Endothelial cell of umbilical vein (primary cell): ENCODE measurements at regions of chr16 and their contacts with region 1.

Region 1: DNA sequence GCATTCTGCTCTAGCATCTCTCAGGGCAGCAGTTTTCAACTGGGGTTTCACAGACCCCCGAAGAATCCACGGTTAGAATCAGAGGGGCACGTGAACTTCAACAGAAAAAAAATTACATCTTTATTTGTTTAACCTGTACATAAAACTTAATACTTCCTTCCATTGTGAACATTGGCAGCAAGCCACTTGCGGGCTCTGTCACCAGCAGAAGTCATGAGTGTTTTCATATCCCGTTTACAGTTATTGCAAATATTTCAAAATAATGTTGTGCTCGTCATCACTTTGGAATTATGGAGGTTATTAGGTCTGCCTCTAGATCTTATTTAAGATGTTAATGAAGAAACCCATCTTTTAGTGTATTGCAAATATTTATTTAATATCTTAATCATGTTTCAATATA is 109.8 kb downstream of the SDR42E1 start:
- DNase-seq: peak; percentile 97
- H3K4me3 ChIP-seq: peak overlapping the region in 1 of 3 experiments; percentile 4
- H3K27ac ChIP-seq: peak overlapping the region; percentile 88
- H3K4me1 ChIP-seq: peaks cover 31% of the 10 kb centered on the region
- H3K27me3 ChIP-seq: no peaks in the 10 kb centered on the region
- CTCF ChIP-seq: no peak
- POLR2A ChIP-seq: peak; percentile 57

Region 2: DNA sequence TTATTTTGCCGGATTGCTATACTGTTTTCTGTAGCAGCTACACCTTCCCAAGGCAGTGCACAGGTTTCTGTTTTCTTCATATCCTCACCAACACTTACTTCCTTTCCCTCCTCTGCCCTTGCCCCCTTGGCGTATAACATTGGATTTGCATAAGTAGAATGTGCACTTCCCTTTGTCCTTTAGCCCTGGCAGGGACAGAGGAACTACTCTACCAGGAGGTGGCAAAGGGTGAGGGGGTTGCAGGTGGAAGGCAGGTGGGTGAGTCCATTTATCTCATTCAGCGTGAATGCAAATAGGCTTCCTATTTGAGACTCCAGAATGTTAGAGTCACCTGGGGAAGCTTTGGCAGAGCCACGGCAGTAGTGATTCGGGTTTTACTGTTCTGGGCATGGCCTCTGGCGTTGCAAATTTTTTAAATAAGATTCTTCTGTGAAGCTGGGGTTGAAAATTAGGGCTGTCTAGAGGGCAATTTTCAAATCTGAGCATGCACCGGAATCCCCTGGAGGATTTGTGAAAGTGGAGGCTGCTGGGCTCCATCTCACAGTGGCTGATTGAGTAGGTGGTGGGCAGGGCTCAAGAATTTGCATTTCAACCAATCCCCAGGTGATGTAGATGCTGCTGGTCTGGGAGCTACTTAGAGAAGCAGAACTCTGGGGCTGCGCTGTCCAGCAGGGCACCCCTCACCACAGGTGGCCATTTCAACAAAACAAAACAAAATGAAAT is 37.7 kb before region 1 on chr16:
- CTCF ChIA-PET with region 1: no interaction called
- POLR2A ChIA-PET with region 1: no interaction called
- dilution Hi-C with region 1: no loop called
- intact Hi-C with region 1: loop called (anchors 2 kb)
- DNase-seq: no peak
- H3K4me3 ChIP-seq: no peak overlapping the region
- H3K27ac ChIP-seq: no peak overlapping the region
- H3K4me1 ChIP-seq: peaks cover 25% of the 10 kb centered on the region
- H3K27me3 ChIP-seq: no peaks in the 10 kb centered on the region
- CTCF ChIP-seq: no peak
- POLR2A ChIP-seq: no peak

Region 3: DNA sequence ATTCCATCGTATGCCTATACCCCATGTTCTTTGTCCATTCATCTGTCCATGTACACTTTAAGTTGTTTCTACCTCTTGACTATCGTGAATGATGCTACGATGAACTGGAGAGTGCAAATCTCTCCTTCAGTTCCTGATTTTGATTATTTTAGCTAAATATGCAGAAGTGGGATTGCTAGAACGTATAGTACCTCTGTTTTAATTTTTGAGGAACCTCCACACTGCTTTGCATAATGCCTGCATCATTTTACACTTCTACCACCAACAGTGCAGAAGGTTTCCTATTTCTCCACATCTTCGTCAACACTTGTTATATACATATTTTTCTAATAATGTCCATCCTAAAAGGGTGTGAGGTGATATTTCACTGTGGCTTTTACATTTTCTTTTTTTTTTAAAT is 65.9 kb after region 1 on chr16:
- CTCF ChIA-PET with region 1: no interaction called
- POLR2A ChIA-PET with region 1: no interaction called
- dilution Hi-C with region 1: no loop called
- intact Hi-C with region 1: no loop called
- DNase-seq: no peak
- H3K4me3 ChIP-seq: no peak overlapping the region
- H3K27ac ChIP-seq: no peak overlapping the region
- H3K4me1 ChIP-seq: no peaks in the 10 kb centered on the region
- H3K27me3 ChIP-seq: peaks cover 0 to 4% of the 10 kb centered on the region in 2 experiments
- CTCF ChIP-seq: no peak
- POLR2A ChIP-seq: no peak

Region 4: GRCh38 chr16:81996664-81997622 is 95.5 kb after region 1 on chr16:
- CTCF ChIA-PET with region 1: interaction called, 16 read pairs
- POLR2A ChIA-PET with region 1: interaction called, 13 read pairs
- dilution Hi-C with region 1: no loop called
- intact Hi-C with region 1: loop called (anchors 1 kb)
- DNase-seq: peak; percentile 90
- H3K4me3 ChIP-seq: peak overlapping the region in 1 of 3 experiments; percentile 33
- H3K27ac ChIP-seq: peak overlapping the region; percentile 96
- H3K4me1 ChIP-seq: peaks cover 41% of the 10 kb centered on the region
- H3K27me3 ChIP-seq: no peaks in the 10 kb centered on the region
- CTCF ChIP-seq: peak; percentile 34 to 39
- POLR2A ChIP-seq: no peak

Region 5: DNA sequence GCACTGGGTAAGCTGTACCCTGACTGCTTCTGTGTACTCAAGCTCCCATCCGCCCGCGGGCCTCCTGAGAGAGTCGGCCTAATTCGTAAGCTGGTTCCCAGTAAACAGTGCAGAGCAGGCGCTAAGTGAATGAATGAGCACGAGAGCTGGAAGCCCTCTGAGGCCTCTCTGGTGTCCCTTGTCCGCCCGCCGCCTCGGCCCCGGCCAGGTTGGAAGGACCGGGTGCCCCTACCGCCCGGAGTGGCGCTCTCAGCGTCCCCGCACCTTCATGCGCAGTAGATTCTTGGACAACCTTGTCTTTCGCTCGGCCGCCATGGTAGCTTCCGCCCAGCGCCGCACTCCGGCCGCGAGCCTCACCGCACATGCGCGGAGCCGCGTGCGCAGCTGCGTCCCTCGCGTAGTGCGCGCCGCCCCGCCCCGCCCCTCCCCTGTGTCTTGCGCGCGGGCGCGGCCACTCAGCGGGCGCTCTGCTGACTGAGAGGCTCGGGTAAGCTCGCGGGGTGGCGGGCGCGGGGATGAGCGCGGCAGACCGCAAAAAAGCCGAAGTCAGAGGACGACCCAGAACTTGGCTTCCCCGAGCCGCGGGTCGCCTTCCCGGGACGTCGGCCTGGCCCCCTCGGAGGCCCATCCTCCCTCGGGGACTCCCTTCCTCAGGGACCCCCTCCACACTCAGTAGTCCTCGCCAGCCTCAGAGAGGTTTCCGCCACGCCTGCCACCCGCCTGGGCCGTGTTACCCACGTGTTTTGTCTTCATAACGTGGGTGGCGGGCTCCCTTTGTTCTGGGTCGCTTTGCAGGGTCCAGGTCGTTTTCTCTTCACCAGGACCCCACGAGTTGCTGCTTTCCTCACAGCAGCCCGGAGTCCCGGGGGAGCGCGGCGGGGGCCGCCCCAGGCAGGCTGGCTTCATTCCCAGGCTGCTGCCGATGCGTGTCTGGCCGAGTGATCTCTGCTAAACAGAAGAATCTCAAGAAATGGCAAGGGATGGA is 268.7 kb after region 1 on chr16 and contains the start of gene MPHOSPH6:
- CTCF ChIA-PET with region 1: no interaction called
- POLR2A ChIA-PET with region 1: no interaction called
- dilution Hi-C with region 1: no loop called
- intact Hi-C with region 1: loop called (anchors 1 kb)
- DNase-seq: peak; percentile 92
- H3K4me3 ChIP-seq: peak within 1 kb of the TSS; percentile 63 to 92 (median 86)
- H3K27ac ChIP-seq: peak within 1 kb of the TSS; percentile 72
- H3K4me1 ChIP-seq: peaks cover 12% of the 10 kb centered on the region
- H3K27me3 ChIP-seq: peaks cover 9 to 17% of the 10 kb centered on the region in 2 experiments
- CTCF ChIP-seq: no peak
- POLR2A ChIP-seq: peak; percentile 74
- total RNA-seq, gene MPHOSPH6: 32.0 and 32.5 TPM in 2 replicates

Region 6: DNA sequence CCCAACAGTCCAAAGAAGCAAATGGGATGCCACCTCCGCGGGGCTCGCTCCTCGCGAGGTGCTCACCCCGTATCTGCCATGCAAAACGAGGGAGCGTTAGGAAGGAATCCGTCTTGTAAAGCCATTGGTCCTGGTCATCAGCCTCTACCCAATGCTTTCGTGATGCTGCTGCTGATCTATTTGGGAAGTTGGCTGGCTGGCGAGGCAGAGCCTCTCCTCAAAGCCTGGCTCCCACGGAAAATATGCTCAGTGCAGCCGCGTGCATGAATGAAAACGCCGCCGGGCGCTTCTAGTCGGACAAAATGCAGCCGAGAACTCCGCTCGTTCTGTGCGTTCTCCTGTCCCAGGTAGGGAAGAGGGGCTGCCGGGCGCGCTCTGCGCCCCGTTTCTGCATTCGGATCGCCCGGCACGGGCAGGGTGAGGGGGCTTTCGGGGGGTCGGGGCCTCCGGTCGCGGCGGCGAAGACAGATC is 725.3 kb after region 1 on chr16 and contains the start of gene CDH13:
- CTCF ChIA-PET with region 1: no interaction called
- POLR2A ChIA-PET with region 1: no interaction called
- dilution Hi-C with region 1: no loop called
- intact Hi-C with region 1: loop called (anchors 2 kb)
- DNase-seq: peak; percentile 62
- H3K4me3 ChIP-seq: peak within 1 kb of the TSS; percentile 52 to 82 (median 66)
- H3K27ac ChIP-seq: peak within 1 kb of the TSS; percentile 96
- H3K4me1 ChIP-seq: peaks cover 46% of the 10 kb centered on the region
- H3K27me3 ChIP-seq: peaks cover 0 to 2% of the 10 kb centered on the region in 2 experiments
- CTCF ChIP-seq: no peak
- POLR2A ChIP-seq: no peak
- total RNA-seq, gene CDH13: 98.5 and 124 TPM in 2 replicates